ENCODE measurements at regions of chr5 and their contacts with region 1.

Region 1: DNA sequence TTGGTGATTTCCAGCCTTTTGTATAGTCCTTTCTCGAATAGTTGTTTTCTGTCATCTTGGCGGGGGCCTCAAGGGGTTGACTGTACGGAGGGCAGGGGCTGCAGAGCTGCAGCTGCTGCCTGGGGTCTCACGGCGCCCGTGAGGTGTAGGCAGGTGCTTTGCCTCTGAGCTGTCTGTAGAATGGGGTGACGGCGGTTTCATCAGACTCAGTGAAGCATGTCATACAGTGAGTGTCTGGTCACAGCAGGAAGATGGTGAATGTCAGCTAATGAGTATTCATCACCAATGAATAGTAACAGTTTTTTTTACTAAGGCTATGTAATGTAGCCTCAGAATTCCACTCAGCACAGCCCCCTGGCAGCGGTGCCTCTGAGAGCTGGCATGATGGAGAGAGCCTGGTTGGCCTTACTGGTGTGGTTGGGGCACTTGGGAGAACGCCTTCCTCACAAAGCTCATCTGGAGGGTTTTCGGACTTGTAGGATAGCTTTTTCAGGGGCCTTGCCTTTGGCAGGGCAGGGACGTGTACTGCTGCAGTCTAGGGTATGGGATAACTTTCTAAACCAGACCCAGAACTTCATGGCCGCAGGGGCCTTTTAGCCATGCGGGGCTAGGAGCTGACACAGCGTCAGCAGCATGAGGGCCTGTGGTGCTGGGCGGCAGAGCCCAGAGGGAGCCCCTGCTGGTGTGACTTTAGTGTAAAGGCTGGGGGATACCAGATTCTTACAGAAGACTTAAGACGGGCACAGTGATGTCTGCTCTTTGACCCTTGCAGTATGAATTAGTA is 15.0 kb downstream of the TENT4A start:
- DNase-seq: peak; percentile 84
- H3K4me3 ChIP-seq: peak overlapping the region; percentile 55
- H3K27ac ChIP-seq: peak overlapping the region; percentile 86
- H3K4me1 ChIP-seq: peaks cover 54% of the 10 kb centered on the region
- CTCF ChIP-seq: peak; percentile 64

Region 2: GRCh38 chr5:6659941-6660684 is 68.1 kb before region 1 on chr5:
- CTCF ChIA-PET with region 1: no interaction called
- POLR2A ChIA-PET with region 1: interaction called, 11 read pairs
- intact Hi-C with region 1: loop called (anchors 2 kb)
- DNase-seq: peak; percentile 88
- H3K4me3 ChIP-seq: peak overlapping the region; percentile 61
- H3K27ac ChIP-seq: peak overlapping the region; percentile 92
- H3K4me1 ChIP-seq: peaks cover 32% of the 10 kb centered on the region
- CTCF ChIP-seq: no peak

Region 3: GRCh38 chr5:6745706-6746222 is 17.6 kb after region 1 on chr5:
- CTCF ChIA-PET with region 1: interaction called, 3 read pairs
- POLR2A ChIA-PET with region 1: interaction called, 10 read pairs
- intact Hi-C with region 1: no loop called
- DNase-seq: peak; percentile 69
- H3K4me3 ChIP-seq: no peak overlapping the region
- H3K27ac ChIP-seq: no peak overlapping the region
- H3K4me1 ChIP-seq: peaks cover 11% of the 10 kb centered on the region
- CTCF ChIP-seq: peak; percentile 95

Measured in OCI-LY7 (cell line).